Right lobe of liver (tissue), 6 donors: ENCODE measurements at regions of chr4 and their contacts with region 1.

Region 1: DNA sequence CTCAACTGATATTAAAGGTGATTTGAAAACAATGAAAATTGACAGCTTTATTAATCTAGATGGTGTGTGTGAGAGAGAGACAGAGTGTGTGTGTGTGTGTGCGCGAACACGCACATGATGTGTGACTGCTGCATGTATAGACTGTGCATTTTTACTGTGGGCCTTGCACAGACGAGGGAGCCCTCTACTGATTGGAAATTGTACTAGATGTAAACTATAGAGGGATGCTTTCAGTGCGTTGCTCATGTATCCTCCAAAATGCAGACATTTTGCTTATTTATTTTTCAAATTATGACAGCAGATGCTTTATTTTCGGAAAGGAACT is 168.4 kb upstream of the GK2 start:
- DNase-seq: no peak
- ATAC-seq: peak in 1 of 4 donors; percentile 45
- H3K4me3 ChIP-seq: no peak overlapping the region
- H3K27ac ChIP-seq: no peak overlapping the region
- H3K4me1 ChIP-seq: no peaks in the 10 kb centered on the region
- H3K27me3 ChIP-seq: no peaks in the 10 kb centered on the region
- CTCF ChIP-seq: peak in 3 of 4 donors; percentile 12 to 22 (median 22)
- POLR2A ChIP-seq: no peak

Region 2: DNA sequence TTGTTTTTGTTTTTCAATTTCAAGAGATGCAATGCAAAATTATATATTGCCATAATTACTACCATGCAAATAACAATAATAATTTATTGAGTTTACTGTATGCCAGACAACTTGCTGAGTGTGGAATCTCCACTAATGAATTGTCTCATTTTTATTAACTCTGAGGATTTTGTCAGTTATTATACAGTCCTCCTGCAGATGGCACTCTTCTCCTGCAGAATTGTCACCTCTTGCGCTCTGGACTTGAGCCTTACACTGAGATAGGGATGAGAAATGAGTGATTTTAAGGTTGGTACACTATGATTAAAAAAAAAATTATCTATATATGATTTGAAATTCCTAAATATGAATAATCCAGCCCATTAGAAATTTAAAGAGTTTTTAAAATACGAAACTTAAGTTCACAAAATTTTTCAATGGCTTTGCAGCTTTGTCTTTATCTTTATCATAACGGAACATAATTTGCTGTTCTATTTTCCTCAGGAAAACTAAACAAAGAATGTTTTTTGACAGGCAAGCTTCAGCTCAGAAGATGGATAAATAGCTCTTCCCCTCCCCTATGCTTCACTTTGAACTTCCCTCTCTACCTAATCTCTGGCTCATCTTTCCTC is 624.4 kb before region 1 on chr4:
- intact Hi-C with region 1: loop called in 1 of 2 experiments (anchors 10 kb)
- DNase-seq: no peak
- ATAC-seq: peak; percentile 85 to 93 (median 88)
- H3K4me3 ChIP-seq: no peak overlapping the region
- H3K27ac ChIP-seq: no peak overlapping the region
- H3K4me1 ChIP-seq: no peaks in the 10 kb centered on the region
- H3K27me3 ChIP-seq: no peaks in the 10 kb centered on the region
- CTCF ChIP-seq: peak; percentile 58 to 80 (median 71)
- POLR2A ChIP-seq: no peak

Region 3: GRCh38 chr4:80365928-80366327 is 789.5 kb after region 1 on chr4:
- intact Hi-C with region 1: no loop called
- DNase-seq: peak in 1 of 3 donors; percentile 19
- ATAC-seq: peak; percentile 77 to 85 (median 79)
- H3K4me3 ChIP-seq: no peak overlapping the region
- H3K27ac ChIP-seq: no peak overlapping the region
- H3K4me1 ChIP-seq: no peaks in the 10 kb centered on the region
- H3K27me3 ChIP-seq: no peaks in the 10 kb centered on the region
- CTCF ChIP-seq: peak; percentile 43 to 53 (median 47)
- POLR2A ChIP-seq: no peak